HepG2 (cell line): ENCODE measurements at regions of chr1 and their contacts with region 1.

Region 1: GRCh38 chr1:33792651-33793050 is 71.2 kb upstream of the HMGB4 start:
- DNase-seq: no peak
- ATAC-seq: no peak
- H3K4me3 ChIP-seq: no peak overlapping the region
- H3K27ac ChIP-seq: no peak overlapping the region
- H3K4me1 ChIP-seq: no peaks in the 10 kb centered on the region
- H3K27me3 ChIP-seq: no peaks in the 10 kb centered on the region
- CTCF ChIP-seq: no peak
- EP300 ChIP-seq: no peak
- POLR2A ChIP-seq: no peak
- RAD21 ChIP-seq: no peak

Region 2: DNA sequence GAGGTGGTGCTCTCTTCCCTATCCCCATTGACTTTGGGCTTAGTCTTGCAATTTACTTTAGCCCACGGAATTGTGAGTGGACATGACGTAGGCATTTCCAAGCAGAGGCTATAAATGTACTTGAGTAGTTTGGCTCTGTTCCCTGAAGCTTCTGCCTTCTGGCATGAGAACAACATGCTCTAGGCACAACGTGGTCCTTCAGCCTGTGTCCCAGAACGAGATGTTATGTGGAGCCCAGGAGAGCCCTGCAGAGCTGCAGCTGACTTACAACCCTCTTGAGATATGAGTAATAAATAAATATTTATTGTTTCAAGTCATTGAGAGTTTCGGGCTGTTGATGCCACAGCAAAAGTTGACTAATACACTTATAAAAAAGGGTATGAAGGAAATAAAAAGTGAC is 34.0 kb before region 1 on chr1:
- CTCF ChIA-PET with region 1: no interaction called
- POLR2A ChIA-PET with region 1: no interaction called
- in situ Hi-C with region 1: no loop called
- intact Hi-C with region 1: loop called (anchors 2 kb)
- DNase-seq: no peak
- ATAC-seq: no peak
- H3K4me3 ChIP-seq: no peak overlapping the region
- H3K27ac ChIP-seq: no peak overlapping the region
- H3K4me1 ChIP-seq: no peaks in the 10 kb centered on the region
- H3K27me3 ChIP-seq: no peaks in the 10 kb centered on the region
- CTCF ChIP-seq: no peak
- EP300 ChIP-seq: no peak
- POLR2A ChIP-seq: no peak
- RAD21 ChIP-seq: no peak